ENCODE measurements at regions of chr5 and their contacts with region 1.

Region 1: GRCh38 chr5:14628346-14628745 is 36.2 kb upstream of the OTULIN start:
- ATAC-seq: peak in 4 of 8 experiments; percentile 43 to 79 (median 69)
- H3K4me3 ChIP-seq: no peak overlapping the region
- H3K27ac ChIP-seq: no peak overlapping the region
- H3K4me1 ChIP-seq: peaks cover 0 to 3% of the 10 kb centered on the region in 2 donors

Region 2: GRCh38 chr5:14351845-14352712 is 276.3 kb before region 1 on chr5:
- in situ Hi-C with region 1: loop called in 2 of 9 experiments (anchors 25 kb)
- ATAC-seq: peak; percentile 91 to 98 (median 96)
- H3K4me3 ChIP-seq: no peak overlapping the region
- H3K27ac ChIP-seq: no peak overlapping the region
- H3K4me1 ChIP-seq: peaks cover 8 to 11% of the 10 kb centered on the region in 2 donors

Region 3: GRCh38 chr5:14405267-14405666 is 223.1 kb before region 1 on chr5:
- in situ Hi-C with region 1: loop called in 1 of 9 experiments (anchors 25 kb)
- ATAC-seq: peak in 2 of 8 experiments; percentile 3 to 23
- H3K4me3 ChIP-seq: no peak overlapping the region
- H3K27ac ChIP-seq: peak overlapping the region; percentile 1 to 43
- H3K4me1 ChIP-seq: peaks cover 11 to 40% of the 10 kb centered on the region in 2 donors

Region 4: DNA sequence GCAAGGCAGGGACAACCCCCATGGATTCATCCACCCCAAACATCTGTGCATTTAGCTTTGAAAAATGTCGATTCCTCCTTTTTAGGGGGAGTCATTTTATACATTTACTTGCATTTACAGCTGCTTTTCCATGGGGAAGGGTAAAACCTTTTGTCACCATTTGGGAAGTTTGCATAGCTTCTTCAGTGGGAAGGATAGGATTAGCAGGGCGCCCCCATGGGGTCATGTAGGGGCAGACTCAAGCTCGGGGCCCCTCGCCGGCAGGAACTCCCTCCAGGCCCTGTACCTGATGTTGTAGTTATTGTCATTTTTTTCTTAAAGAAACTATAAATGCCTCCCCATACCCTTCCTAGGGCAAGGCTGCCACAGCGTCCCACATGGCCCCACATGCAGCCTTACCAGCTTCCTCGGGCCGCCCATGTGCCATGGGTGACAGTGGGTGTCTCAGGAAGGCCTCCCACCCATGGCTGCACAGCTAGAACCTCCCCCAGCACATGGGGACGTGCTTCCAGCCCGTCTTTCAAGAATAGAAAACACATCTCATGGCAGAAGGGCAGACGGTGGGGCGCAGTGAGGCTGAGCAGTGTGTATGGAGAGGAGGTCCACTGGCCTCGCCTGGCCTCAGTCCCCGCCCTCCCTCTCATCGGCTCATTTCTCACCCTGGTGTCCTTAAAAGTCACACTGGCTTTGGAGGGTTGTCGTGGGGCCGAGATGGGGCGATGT is 122.9 kb before region 1 on chr5:
- in situ Hi-C with region 1: loop called in 1 of 9 experiments (anchors 25 kb)
- ATAC-seq: peak in 3 of 8 experiments; percentile 18 to 49 (median 42)
- H3K4me3 ChIP-seq: no peak overlapping the region
- H3K27ac ChIP-seq: peak overlapping the region in 1 of 2 donors; percentile 59
- H3K4me1 ChIP-seq: peaks cover 6 to 7% of the 10 kb centered on the region in 2 donors

Region 5: GRCh38 chr5:14882658-14883580 is 254.6 kb after region 1 on chr5:
- in situ Hi-C with region 1: no loop called
- ATAC-seq: no peak
- H3K4me3 ChIP-seq: no peak overlapping the region
- H3K27ac ChIP-seq: no peak overlapping the region
- H3K4me1 ChIP-seq: peaks cover 0 to 7% of the 10 kb centered on the region in 2 donors